ENCODE measurements at regions of chr5 and their contacts with region 1.

Region 1: DNA sequence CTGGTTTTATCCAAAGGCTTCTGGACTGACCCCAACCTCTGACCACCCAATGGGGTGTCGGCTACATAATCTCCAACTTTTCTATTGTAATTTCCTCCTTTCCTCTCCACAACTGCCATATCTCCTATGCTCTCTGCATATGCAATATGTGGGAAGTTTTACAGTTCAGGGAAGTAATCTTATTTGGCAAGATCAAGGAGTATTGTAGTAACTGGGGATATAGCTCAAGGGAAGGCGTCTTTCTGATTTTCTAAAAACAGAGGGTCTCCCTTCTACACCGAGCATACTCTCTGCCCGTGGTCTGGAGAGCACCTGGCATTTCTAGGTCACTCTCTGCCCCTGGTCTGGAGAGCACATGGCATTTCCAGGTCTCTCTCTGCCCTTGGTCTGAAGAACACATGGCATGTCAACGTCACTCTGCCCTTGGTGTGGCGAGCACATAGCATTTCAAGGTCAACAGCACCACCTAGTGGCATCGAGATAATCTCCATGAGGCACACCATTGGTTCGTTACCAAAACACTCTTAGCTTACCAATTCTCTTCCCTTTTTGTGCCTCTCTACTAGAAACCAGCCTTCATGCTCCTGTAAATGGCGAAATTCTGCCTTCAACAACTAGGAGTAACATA is 616.4 kb upstream of the NUDT12 start:
- DNase-seq: no peak
- H3K4me3 Mint-ChIP-seq: no peak overlapping the region
- H3K27ac Mint-ChIP-seq: no peak overlapping the region
- H3K4me1 Mint-ChIP-seq: no peaks in the 10 kb centered on the region
- H3K27me3 Mint-ChIP-seq: no peaks in the 10 kb centered on the region

Region 2: DNA sequence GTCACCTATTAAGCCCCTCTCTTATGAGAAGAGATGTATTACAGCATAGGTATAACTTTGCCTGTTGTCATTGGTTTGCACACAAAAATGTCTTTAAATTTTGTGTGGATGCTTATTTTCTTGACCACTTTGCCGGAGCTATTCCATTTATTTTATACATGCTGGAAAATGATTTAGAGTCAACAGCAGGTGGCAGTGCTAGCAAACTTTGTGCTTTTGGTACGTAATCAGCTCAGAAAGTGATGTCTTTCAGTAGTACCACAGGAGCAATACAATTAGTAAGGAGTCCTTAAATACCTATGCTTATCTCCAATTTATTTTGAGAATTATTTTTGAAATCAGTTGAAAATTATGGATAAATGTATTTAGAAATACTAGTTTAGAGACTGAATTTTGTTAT is 596.6 kb before region 1 on chr5:
- intact Hi-C with region 1: loop called (anchors 2 kb)
- DNase-seq: no peak
- H3K4me3 Mint-ChIP-seq: no peak overlapping the region
- H3K27ac Mint-ChIP-seq: no peak overlapping the region
- H3K4me1 Mint-ChIP-seq: no peaks in the 10 kb centered on the region
- H3K27me3 Mint-ChIP-seq: peaks cover 2% of the 10 kb centered on the region

Region 3: GRCh38 chr5:104088876-104089778 is 89.8 kb before region 1 on chr5:
- intact Hi-C with region 1: no loop called
- DNase-seq: no peak
- H3K4me3 Mint-ChIP-seq: no peak overlapping the region
- H3K27ac Mint-ChIP-seq: no peak overlapping the region
- H3K4me1 Mint-ChIP-seq: no peaks in the 10 kb centered on the region
- H3K27me3 Mint-ChIP-seq: no peaks in the 10 kb centered on the region

Region 4: DNA sequence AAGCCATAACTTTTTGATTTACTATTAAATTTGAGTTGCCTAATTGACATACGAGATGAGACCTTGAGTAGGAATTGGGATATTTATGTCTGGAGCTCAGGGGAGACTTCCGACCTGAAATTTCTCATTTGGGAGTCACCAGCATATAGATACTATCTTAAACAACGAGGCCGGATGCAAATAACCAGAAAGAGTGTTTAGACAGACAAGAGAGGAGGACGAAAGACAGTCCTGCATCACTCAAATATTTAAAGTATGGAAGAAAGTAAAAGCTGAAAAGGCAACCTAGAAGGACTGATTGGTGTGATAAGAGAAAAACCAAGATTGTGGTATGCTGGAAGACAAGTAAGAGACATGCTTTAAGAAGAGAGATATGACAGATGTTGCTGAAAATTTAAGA is 58.6 kb after region 1 on chr5:
- intact Hi-C with region 1: no loop called
- DNase-seq: no peak
- H3K4me3 Mint-ChIP-seq: no peak overlapping the region
- H3K27ac Mint-ChIP-seq: no peak overlapping the region
- H3K4me1 Mint-ChIP-seq: no peaks in the 10 kb centered on the region
- H3K27me3 Mint-ChIP-seq: no peaks in the 10 kb centered on the region

Measured in activated T-helper 1 cell treated with anti-CD3 and anti-CD28 coated beads, Interleukin-12 subunit alpha, Interleukin-12 subunit beta, Interleukin-2, Interleukin-4 antibody, amounts not matched to agents 30 ng/mL and 10 ng/mL and 1 ng/mL, durations not matched to agents 14 hours and 24 hours and 36 hours (primary cell).